Activated CD8-positive, alpha-beta memory T cell treated with anti-CD3 and anti-CD28 coated beads, Interleukin-2, amount 10 ng/mL, durations not matched to agents 7 days and 5 days (primary cell): ENCODE measurements at regions of chr14 and their contacts with region 1.

Region 1: GRCh38 chr14:102437997-102438915 is 71.3 kb downstream of the ANKRD9 start:
- DNase-seq: peak; percentile 69
- ATAC-seq: peak; percentile 80
- H3K4me3 Mint-ChIP-seq: no peak overlapping the region
- H3K27ac Mint-ChIP-seq: no peak overlapping the region
- H3K4me1 Mint-ChIP-seq: peaks cover 3% of the 10 kb centered on the region
- H3K27me3 Mint-ChIP-seq: no peaks in the 10 kb centered on the region

Region 2: GRCh38 chr14:102500158-102500662 is 62.0 kb after region 1 on chr14:
- CTCF ChIA-PET with region 1: interaction called, 15 read pairs
- DNase-seq: peak; percentile 71
- ATAC-seq: peak; percentile 89
- H3K4me3 Mint-ChIP-seq: no peak overlapping the region
- H3K27ac Mint-ChIP-seq: peak overlapping the region; percentile 74
- H3K4me1 Mint-ChIP-seq: peaks cover 17% of the 10 kb centered on the region
- H3K27me3 Mint-ChIP-seq: no peaks in the 10 kb centered on the region

Region 3: GRCh38 chr14:102516531-102517415 is 78.5 kb after region 1 on chr14:
- CTCF ChIA-PET with region 1: interaction called, 60 read pairs
- DNase-seq: peak; percentile 67
- ATAC-seq: peak; percentile 85
- H3K4me3 Mint-ChIP-seq: peak overlapping the region; percentile 73
- H3K27ac Mint-ChIP-seq: peak overlapping the region; percentile 28
- H3K4me1 Mint-ChIP-seq: peaks cover 6% of the 10 kb centered on the region
- H3K27me3 Mint-ChIP-seq: peaks cover 16% of the 10 kb centered on the region

Region 4: DNA sequence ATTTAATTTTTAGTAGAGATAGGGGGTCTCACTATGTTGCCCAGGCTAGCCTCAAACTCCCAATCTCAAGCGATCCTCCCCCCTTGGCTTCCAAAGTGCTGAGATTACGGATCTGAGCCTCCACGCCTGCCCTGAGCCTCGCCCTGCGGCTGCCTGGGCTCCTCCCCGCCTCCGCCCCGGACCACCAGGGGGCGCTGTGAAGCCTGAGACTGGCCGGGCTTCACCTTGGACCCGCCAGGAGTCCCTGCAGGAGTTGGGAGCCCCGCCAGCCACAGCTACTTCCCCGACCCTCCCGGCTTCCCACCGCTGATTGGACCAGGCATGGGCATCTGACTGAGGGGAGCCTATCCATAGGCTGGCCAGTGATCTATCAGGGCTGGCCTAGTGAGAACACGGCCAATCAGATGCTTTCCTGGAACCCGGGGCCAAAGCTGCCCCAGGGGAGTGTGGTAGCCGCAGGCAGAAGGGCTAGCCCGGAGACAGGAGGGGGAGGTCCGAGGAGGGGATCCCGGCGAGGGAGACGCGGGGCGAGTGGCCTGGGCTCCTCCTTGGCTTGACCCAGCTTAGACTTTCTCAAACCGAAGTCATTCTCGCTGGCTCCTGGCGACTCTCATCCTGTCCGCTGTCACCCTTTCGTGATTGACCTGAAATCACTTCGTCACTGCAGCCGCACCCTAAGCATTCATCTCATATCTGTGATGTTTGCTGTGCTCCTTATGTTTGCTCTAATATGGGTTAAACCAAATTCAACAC is 86.4 kb after region 1 on chr14:
- CTCF ChIA-PET with region 1: interaction called, 30 read pairs
- DNase-seq: peak; percentile 99
- ATAC-seq: peak; percentile 99
- H3K4me3 Mint-ChIP-seq: peak overlapping the region; percentile 90
- H3K27ac Mint-ChIP-seq: peak overlapping the region; percentile 86
- H3K4me1 Mint-ChIP-seq: peaks cover 33% of the 10 kb centered on the region
- H3K27me3 Mint-ChIP-seq: no peaks in the 10 kb centered on the region

Region 5: GRCh38 chr14:102545461-102546265 is 107.4 kb after region 1 on chr14:
- CTCF ChIA-PET with region 1: no interaction called
- DNase-seq: no peak
- ATAC-seq: no peak
- H3K4me3 Mint-ChIP-seq: no peak overlapping the region
- H3K27ac Mint-ChIP-seq: no peak overlapping the region
- H3K4me1 Mint-ChIP-seq: peaks cover 3% of the 10 kb centered on the region
- H3K27me3 Mint-ChIP-seq: peaks cover 41% of the 10 kb centered on the region